ENCODE measurements at regions of chr20 and their contacts with region 1.

Region 1: GRCh38 chr20:48295445-48295963 is 510.2 kb upstream of the SULF2 start:
- DNase-seq: peak; percentile 81
- H3K4me3 ChIP-seq: no peak overlapping the region
- CTCF ChIP-seq: peak; percentile 45

Region 2: DNA sequence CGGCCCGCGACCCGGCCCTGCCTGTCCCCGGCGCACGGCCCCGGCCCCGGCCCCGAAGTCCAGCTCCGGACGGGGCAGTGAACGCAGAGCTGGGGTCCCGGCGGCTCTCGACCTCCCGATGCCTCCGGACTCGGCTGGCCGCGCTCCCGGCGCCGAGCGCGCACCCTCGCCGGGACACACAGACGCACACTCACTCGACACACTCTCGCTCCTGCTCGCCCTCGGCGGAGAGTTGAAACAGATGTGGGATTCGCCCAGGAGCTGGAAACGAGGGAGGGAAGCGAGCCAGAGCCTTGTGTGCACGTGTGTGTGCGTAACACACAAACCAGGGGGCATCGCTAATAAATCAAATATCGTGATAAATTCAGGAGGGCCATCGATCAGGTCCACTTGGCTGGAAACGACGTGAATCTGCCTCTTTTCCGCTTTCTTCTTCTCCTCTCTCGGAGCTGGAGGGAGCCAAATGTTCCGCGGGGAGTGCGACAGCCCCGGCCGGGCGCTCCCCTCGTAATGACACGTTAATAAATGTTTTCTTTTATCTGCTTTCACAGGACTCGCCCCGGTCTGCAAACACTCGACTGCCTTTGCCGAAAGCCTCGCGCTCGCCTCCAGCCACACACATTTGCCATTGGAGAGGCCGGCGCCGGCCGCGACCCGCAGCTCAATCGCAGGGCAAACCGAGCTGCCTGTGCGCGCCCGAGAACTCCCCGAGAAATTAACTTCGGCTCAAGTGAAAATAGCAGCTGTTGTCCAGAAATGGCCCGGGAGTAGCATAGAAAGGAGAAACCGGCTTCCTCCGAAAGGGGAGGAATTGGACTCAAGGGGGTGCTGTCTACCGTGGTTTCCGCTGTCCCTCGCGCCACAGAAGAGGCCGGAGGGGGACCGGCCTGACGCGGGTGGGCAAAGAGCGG is 509.4 kb before region 1 on chr20:
- CTCF ChIA-PET with region 1: interaction called, 22 read pairs
- POLR2A ChIA-PET with region 1: interaction called, 4 read pairs
- DNase-seq: peak; percentile 29
- H3K4me3 ChIP-seq: peak overlapping the region; percentile 66
- CTCF ChIP-seq: peak; percentile 75